Mammary epithelial cell (primary cell): ENCODE measurements at regions of chr10 and their contacts with region 1.

Region 1: DNA sequence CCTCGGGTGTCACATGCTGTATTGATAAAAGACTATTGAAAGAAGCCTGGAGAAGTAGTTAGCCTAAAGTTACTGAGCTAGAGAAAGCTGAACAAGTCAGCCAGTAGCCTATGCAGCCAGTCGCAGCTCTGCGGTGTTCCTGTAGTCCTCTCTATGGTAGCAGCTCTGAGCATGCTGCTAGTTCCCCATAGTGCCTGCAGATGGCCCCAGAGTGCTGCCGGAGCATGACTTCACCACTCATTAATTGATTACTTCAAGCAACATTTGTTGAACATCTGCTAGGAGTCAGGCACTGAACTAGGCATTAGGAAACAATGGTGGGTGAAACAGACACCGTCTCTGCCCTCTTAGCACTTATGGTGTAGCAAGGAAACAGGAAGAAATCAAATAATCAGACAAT is 422.7 kb downstream of the SORCS3 start:
- DNase-seq: peak; percentile 33
- H3K4me3 ChIP-seq: no peak overlapping the region
- H3K27ac ChIP-seq: no peak overlapping the region
- H3K4me1 ChIP-seq: no peaks in the 10 kb centered on the region
- H3K27me3 ChIP-seq: no peaks in the 10 kb centered on the region
- CTCF ChIP-seq: peak; percentile 88 to 95

Region 2: GRCh38 chr10:105473170-105473569 is 409.4 kb after region 1 on chr10:
- CTCF ChIA-PET with region 1: no interaction called
- dilution Hi-C with region 1: no loop called
- in situ Hi-C with region 1: no loop called
- intact Hi-C with region 1: loop called (anchors 2 kb)
- DNase-seq: no peak
- H3K4me3 ChIP-seq: no peak overlapping the region
- H3K27ac ChIP-seq: no peak overlapping the region
- H3K4me1 ChIP-seq: no peaks in the 10 kb centered on the region
- H3K27me3 ChIP-seq: no peaks in the 10 kb centered on the region
- CTCF ChIP-seq: no peak

Region 3: GRCh38 chr10:105691811-105692210 is 628.0 kb after region 1 on chr10:
- CTCF ChIA-PET with region 1: interaction called, 3 read pairs
- dilution Hi-C with region 1: no loop called
- in situ Hi-C with region 1: loop called in 1 of 2 experiments (anchors 25 kb)
- intact Hi-C with region 1: loop called (anchors 1 kb)
- DNase-seq: peak; percentile 8
- H3K4me3 ChIP-seq: no peak overlapping the region
- H3K27ac ChIP-seq: no peak overlapping the region
- H3K4me1 ChIP-seq: no peaks in the 10 kb centered on the region
- H3K27me3 ChIP-seq: no peaks in the 10 kb centered on the region
- CTCF ChIP-seq: peak; percentile 13 to 45

Region 4: GRCh38 chr10:106175760-106176377 is 1112.1 kb after region 1 on chr10:
- CTCF ChIA-PET with region 1: no interaction called
- dilution Hi-C with region 1: no loop called
- in situ Hi-C with region 1: no loop called
- intact Hi-C with region 1: loop called (anchors 5 kb)
- DNase-seq: peak; percentile 8
- H3K4me3 ChIP-seq: no peak overlapping the region
- H3K27ac ChIP-seq: no peak overlapping the region
- H3K4me1 ChIP-seq: no peaks in the 10 kb centered on the region
- H3K27me3 ChIP-seq: no peaks in the 10 kb centered on the region
- CTCF ChIP-seq: peak; percentile 52 to 64